ENCODE measurements at regions of chr4 and their contacts with region 1.

Region 1: GRCh38 chr4:39977489-39978377 is at the start of gene PDS5A:
- DNase-seq: peak; percentile 95
- ATAC-seq: peak; percentile 90
- H3K4me3 Mint-ChIP-seq: peak within 1 kb of the TSS; percentile 80
- H3K27ac Mint-ChIP-seq: peak within 1 kb of the TSS; percentile 98
- H3K4me1 Mint-ChIP-seq: peaks cover 38% of the 10 kb centered on the region
- H3K27me3 Mint-ChIP-seq: no peaks in the 10 kb centered on the region
- total RNA-seq, gene PDS5A: 98.5 to 102 TPM

Region 2: GRCh38 chr4:39365830-39366771 is 611.6 kb before region 1 on chr4 and contains the start of gene RFC1:
- CTCF ChIA-PET with region 1: no interaction called
- POLR2A ChIA-PET with region 1: interaction called, 3 read pairs
- intact Hi-C with region 1: loop called in 1 of 2 experiments (anchors 2 kb)
- DNase-seq: peak; percentile 97
- ATAC-seq: peak; percentile 90
- H3K4me3 Mint-ChIP-seq: peak within 1 kb of the TSS; percentile 98
- H3K27ac Mint-ChIP-seq: peak within 1 kb of the TSS; percentile 97
- H3K4me1 Mint-ChIP-seq: peaks cover 32% of the 10 kb centered on the region
- H3K27me3 Mint-ChIP-seq: no peaks in the 10 kb centered on the region
- total RNA-seq, gene RFC1: 112 to 216 TPM

Region 3: GRCh38 chr4:39527273-39528060 is 450.3 kb before region 1 on chr4 and contains the start of gene UGDH:
- CTCF ChIA-PET with region 1: no interaction called
- POLR2A ChIA-PET with region 1: no interaction called
- intact Hi-C with region 1: loop called (anchors 1 to 2 kb)
- DNase-seq: peak; percentile 95
- ATAC-seq: peak; percentile 99
- H3K4me3 Mint-ChIP-seq: peak within 1 kb of the TSS; percentile 87
- H3K27ac Mint-ChIP-seq: peak within 1 kb of the TSS; percentile 97
- H3K4me1 Mint-ChIP-seq: peaks cover 16% of the 10 kb centered on the region
- H3K27me3 Mint-ChIP-seq: no peaks in the 10 kb centered on the region
- total RNA-seq, gene UGDH: 30.2 to 31.3 TPM

Region 4: GRCh38 chr4:39697740-39698423 is 279.9 kb before region 1 on chr4 and contains the start of gene UBE2K:
- CTCF ChIA-PET with region 1: interaction called, 7 read pairs
- POLR2A ChIA-PET with region 1: interaction called, 3 read pairs
- intact Hi-C with region 1: loop called (anchors 1 kb)
- DNase-seq: peak; percentile 93
- ATAC-seq: peak; percentile 87
- H3K4me3 Mint-ChIP-seq: peak within 1 kb of the TSS; percentile 99
- H3K27ac Mint-ChIP-seq: peak within 1 kb of the TSS; percentile 99
- H3K4me1 Mint-ChIP-seq: peaks cover 28% of the 10 kb centered on the region
- H3K27me3 Mint-ChIP-seq: no peaks in the 10 kb centered on the region
- total RNA-seq, gene UBE2K: 87.2 to 122 TPM

Region 5: GRCh38 chr4:39908284-39908683 is 69.4 kb before region 1 on chr4:
- CTCF ChIA-PET with region 1: interaction called, 4 read pairs
- POLR2A ChIA-PET with region 1: interaction called, 4 read pairs
- intact Hi-C with region 1: loop called in 1 of 2 experiments (anchors 10 kb)
- DNase-seq: no peak
- ATAC-seq: no peak
- H3K4me3 Mint-ChIP-seq: no peak overlapping the region
- H3K27ac Mint-ChIP-seq: no peak overlapping the region
- H3K4me1 Mint-ChIP-seq: peaks cover 7% of the 10 kb centered on the region
- H3K27me3 Mint-ChIP-seq: no peaks in the 10 kb centered on the region

Region 6: DNA sequence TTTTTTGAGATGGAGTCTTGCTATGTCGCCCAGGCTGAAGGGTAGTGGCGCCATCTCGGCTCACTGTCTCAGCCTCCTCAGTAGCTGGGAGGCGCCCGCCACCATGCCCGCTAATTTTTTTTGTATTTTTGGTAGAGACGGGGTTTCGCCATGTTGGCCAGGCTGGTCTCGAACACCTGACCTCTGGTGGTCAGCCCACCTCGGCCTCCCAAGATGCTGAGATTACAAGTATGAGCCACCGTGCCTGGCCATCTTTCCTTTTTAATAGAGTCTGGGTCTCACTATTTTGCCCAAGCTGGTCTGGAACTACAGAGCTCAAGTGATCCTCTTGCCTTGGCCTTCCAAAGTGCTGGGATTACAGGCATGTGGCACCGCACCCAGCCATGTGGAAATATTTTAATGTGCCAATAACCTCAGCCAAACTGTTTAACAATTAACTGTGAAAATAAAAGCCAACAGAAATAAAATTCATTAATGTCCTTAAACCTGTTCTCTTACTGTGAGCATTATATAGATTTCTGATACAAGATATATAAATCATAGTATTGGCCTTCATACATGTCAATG is 16.3 kb before region 1 on chr4:
- CTCF ChIA-PET with region 1: interaction called, 10 read pairs
- POLR2A ChIA-PET with region 1: interaction called, 7 read pairs
- intact Hi-C with region 1: no loop called
- DNase-seq: no peak
- ATAC-seq: no peak
- H3K4me3 Mint-ChIP-seq: no peak overlapping the region
- H3K27ac Mint-ChIP-seq: no peak overlapping the region
- H3K4me1 Mint-ChIP-seq: peaks cover 27% of the 10 kb centered on the region
- H3K27me3 Mint-ChIP-seq: no peaks in the 10 kb centered on the region

Measured in activated CD4-positive, alpha-beta T cell treated with anti-CD3 and anti-CD28 coated beads for 36 hours (primary cell).